Dendritic cell treated with granulocyte-macrophage colony-stimulating factor and Interleukin-4, amounts not matched to agents 40 ng/mL and 50 ng/mL, for 4 days (primary cell): ENCODE measurements at regions of chr4 and their contacts with region 1.

Region 1: DNA sequence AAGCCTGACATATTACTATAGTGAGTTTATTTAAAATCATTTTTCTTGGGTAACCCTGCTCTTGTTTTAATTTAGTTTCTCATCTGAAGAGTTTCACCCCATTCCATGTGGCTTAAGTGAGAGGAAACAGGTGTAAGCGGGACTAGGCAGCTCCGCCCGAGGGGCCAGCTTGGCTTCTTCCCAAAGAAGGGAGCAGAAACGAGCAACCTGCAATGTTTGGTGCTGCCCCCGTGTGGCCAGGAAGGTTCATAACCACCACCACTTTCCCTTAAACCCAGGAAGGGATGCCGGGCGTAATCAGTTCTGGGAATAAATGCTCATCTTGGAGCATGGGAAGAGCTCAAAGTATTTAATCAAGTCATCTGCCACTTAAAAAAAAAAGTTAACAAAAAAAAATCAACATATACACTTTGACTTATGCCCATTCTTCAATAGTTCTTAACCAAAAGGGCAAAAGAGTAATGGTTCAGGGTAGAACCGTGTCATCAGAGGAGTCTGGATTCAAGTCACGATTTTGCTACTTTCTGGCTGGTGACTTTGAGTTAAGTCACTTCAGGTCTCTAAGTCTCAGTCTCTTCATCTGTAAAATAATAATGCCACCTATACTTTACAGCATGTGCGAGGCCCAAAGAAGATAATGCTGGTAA is 147.9 kb downstream of the NSUN7 start:
- H3K4me3 Mint-ChIP-seq: peak overlapping the region; percentile 50
- H3K27ac Mint-ChIP-seq: no peak overlapping the region
- H3K4me1 Mint-ChIP-seq: peaks cover 5% of the 10 kb centered on the region
- H3K27me3 Mint-ChIP-seq: no peaks in the 10 kb centered on the region

Region 2: DNA sequence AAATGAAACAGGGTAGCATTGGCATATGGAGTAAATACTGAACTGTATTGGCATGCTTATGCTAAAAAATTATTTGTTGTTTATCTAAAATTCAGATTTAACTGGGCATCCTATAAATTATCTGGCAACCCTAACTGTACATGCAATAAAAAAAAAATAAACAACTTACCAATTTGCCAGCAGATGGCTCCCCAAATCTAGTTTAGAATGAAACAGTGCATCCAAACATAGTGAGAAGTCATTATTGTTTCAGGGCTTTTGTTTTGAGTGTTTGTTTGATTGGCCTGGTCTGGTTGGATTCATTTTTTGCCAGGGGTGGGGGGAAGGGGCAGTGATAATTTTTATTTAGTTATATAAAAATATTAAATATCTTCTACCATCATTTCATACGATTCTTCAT is 160.8 kb before region 1 on chr4:
- intact Hi-C with region 1: loop called (anchors 1 kb)
- H3K4me3 Mint-ChIP-seq: no peak overlapping the region
- H3K27ac Mint-ChIP-seq: no peak overlapping the region
- H3K4me1 Mint-ChIP-seq: peaks cover 33% of the 10 kb centered on the region
- H3K27me3 Mint-ChIP-seq: no peaks in the 10 kb centered on the region

Region 3: GRCh38 chr4:40825014-40825838 is 72.5 kb before region 1 on chr4:
- intact Hi-C with region 1: no loop called
- H3K4me3 Mint-ChIP-seq: no peak overlapping the region
- H3K27ac Mint-ChIP-seq: no peak overlapping the region
- H3K4me1 Mint-ChIP-seq: peaks cover 16% of the 10 kb centered on the region
- H3K27me3 Mint-ChIP-seq: no peaks in the 10 kb centered on the region

Region 4: GRCh38 chr4:40856822-40857362 is 40.8 kb before region 1 on chr4:
- intact Hi-C with region 1: no loop called
- H3K4me3 Mint-ChIP-seq: peak overlapping the region; percentile 82
- H3K27ac Mint-ChIP-seq: peak overlapping the region; percentile 52
- H3K4me1 Mint-ChIP-seq: peaks cover 28% of the 10 kb centered on the region
- H3K27me3 Mint-ChIP-seq: peaks cover 31% of the 10 kb centered on the region